ENCODE measurements at regions of chr12 and their contacts with region 1.

Region 1: GRCh38 chr12:56189176-56189917 is at the start of gene SMARCC2:
- DNase-seq: peak; percentile 26
- ATAC-seq: peak; percentile 81
- H3K4me3 ChIP-seq: peak within 1 kb of the TSS; percentile 98
- H3K27ac ChIP-seq: peak within 1 kb of the TSS; percentile 91
- H3K4me1 ChIP-seq: 0 out of 2 replicates have a peak, but pooled peaks cover 4% of the 10 kb centered on the region
- H3K27me3 ChIP-seq: no peaks in the 10 kb centered on the region
- CTCF ChIP-seq: peak; percentile 68 to 87 (median 72); a peak in 5 of 6 replicates
- EP300 ChIP-seq: no peak
- POLR2A ChIP-seq: peak; percentile 79
- RAD21 ChIP-seq: peak; percentile 46
- polyA plus RNA-seq, gene SMARCC2: 13.6 to 27.8 TPM

Region 2: DNA sequence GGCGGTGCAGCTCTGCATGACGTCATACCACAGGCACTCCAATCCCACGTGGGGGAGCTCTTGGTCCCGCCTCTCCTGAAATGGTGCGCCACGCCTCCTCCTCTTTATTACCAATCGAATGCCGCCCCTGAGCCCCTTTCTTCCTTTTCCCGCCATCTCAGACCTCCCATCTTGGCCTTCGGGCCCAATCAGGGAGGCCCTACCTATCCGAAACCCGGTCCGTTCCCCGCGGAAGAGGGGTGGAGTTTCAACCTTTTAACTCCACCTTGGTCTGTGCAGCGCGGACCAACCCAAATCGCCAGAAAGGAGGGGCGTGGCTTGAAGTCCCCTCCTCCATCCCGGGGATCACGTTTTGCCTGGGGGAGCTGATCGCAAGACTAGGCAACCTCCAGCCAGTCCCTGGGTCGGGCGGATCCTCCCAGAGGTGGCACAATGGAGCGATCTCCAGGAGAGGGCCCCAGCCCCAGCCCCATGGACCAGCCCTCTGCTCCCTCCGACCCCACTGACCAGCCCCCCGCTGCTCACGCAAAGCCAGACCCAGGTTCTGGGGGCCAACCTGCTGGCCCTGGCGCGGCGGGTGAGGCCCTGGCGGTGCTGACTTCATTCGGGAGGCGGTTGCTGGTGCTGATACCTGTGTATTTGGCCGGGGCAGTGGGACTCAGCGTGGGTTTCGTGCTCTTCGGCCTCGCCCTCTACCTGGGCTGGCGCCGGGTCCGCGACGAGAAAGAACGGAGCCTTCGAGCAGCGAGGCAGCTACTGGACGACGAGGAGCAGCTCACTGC is 61.3 kb before region 1 on chr12 and contains the start of gene ESYT1:
- CTCF ChIA-PET with region 1: interaction called, 129 read pairs
- POLR2A ChIA-PET with region 1: interaction called, 44 read pairs
- RAD21 ChIA-PET with region 1: interaction called, 98 read pairs
- SMC1A ChIA-PET with region 1: interaction called, 68 read pairs
- in situ Hi-C with region 1: loop called (anchors 5 kb)
- intact Hi-C with region 1: loop called (anchors 1 kb)
- DNase-seq: peak; percentile 98
- ATAC-seq: peak; percentile 93
- H3K4me3 ChIP-seq: peak within 1 kb of the TSS; percentile 93
- H3K27ac ChIP-seq: peak within 1 kb of the TSS; percentile 72
- H3K4me1 ChIP-seq: peaks cover 24% of the 10 kb centered on the region
- H3K27me3 ChIP-seq: no peaks in the 10 kb centered on the region
- CTCF ChIP-seq: no peak
- EP300 ChIP-seq: peak in 1 of 2 experiments; percentile 17; a peak in 1 of 4 replicates
- POLR2A ChIP-seq: peak; percentile 87
- RAD21 ChIP-seq: no peak
- polyA plus RNA-seq, gene ESYT1: 55.6 to 57.9 TPM

Region 3: GRCh38 chr12:56206457-56207166 is 17.3 kb after region 1 on chr12:
- CTCF ChIA-PET with region 1: interaction called, 26 read pairs
- POLR2A ChIA-PET with region 1: no interaction called
- RAD21 ChIA-PET with region 1: interaction called, 4 read pairs
- SMC1A ChIA-PET with region 1: interaction called, 6 read pairs
- in situ Hi-C with region 1: no loop called
- intact Hi-C with region 1: no loop called
- DNase-seq: no peak
- ATAC-seq: peak; percentile 95
- H3K4me3 ChIP-seq: no peak overlapping the region
- H3K27ac ChIP-seq: no peak overlapping the region
- H3K4me1 ChIP-seq: no peaks in the 10 kb centered on the region
- H3K27me3 ChIP-seq: no peaks in the 10 kb centered on the region
- CTCF ChIP-seq: peak; percentile 67 to 79 (median 75)
- EP300 ChIP-seq: no peak
- POLR2A ChIP-seq: no peak; the same call in 1 of the 2 replicates
- RAD21 ChIP-seq: peak; percentile 45

Region 4: DNA sequence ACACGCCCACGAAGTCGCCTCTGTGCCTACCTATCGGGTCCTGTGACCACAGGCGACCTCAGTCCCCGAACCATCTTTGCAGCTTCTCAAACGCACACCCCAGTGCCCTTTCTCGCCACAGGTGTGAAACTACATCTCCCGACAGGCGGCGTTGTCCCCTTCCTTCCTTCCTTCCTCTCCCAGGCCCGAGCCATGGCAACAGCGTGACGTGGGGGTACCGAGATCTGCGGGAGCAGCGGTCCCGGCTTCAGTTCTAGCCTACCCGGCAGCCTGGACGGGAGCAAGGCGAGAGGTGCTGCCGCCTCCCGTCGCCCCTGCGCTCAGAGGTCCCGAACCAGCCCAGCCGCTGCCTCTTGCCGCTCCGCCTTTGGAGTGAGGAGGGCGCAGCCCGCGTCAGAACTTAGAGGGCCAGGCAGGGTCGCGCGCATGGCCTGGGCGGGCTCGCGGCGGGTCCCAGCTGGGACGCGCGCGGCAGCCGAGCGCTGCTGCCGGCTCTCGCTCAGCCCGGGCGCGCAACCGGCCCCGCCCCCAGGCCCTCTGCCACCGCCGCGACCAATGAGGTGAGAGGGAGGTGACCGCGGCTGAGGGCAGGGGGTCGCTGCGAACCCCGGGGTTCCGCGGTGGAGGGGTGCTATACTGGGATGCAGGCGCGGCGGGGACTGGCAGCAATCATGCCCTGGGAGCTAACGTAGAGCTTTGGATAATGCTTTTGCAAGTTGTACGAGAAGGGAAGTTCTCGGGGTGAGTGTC is 77.5 kb after region 1 on chr12 and contains the start of gene COQ10A:
- CTCF ChIA-PET with region 1: interaction called, 4 read pairs
- POLR2A ChIA-PET with region 1: interaction called, 3 read pairs
- RAD21 ChIA-PET with region 1: interaction called, 10 read pairs
- SMC1A ChIA-PET with region 1: interaction called, 3 read pairs
- in situ Hi-C with region 1: no loop called
- intact Hi-C with region 1: no loop called
- DNase-seq: peak; percentile 48
- ATAC-seq: peak; percentile 97
- H3K4me3 ChIP-seq: peak within 1 kb of the TSS; percentile 68
- H3K27ac ChIP-seq: peak within 1 kb of the TSS; percentile 41
- H3K4me1 ChIP-seq: peaks cover 4% of the 10 kb centered on the region
- H3K27me3 ChIP-seq: no peaks in the 10 kb centered on the region
- CTCF ChIP-seq: peak; percentile 53 to 62 (median 62)
- EP300 ChIP-seq: no peak
- POLR2A ChIP-seq: peak; percentile 97
- RAD21 ChIP-seq: peak; percentile 24; the same call in 1 of the 2 replicates
- polyA plus RNA-seq, gene COQ10A: 3.3 to 4.5 TPM

Region 5: GRCh38 chr12:56280849-56281248 is 91.5 kb after region 1 on chr12:
- CTCF ChIA-PET with region 1: no interaction called
- POLR2A ChIA-PET with region 1: no interaction called
- RAD21 ChIA-PET with region 1: no interaction called
- SMC1A ChIA-PET with region 1: no interaction called
- in situ Hi-C with region 1: no loop called
- intact Hi-C with region 1: no loop called
- DNase-seq: no peak
- ATAC-seq: no peak
- H3K4me3 ChIP-seq: no peak overlapping the region
- H3K27ac ChIP-seq: no peak overlapping the region
- H3K4me1 ChIP-seq: no peaks in the 10 kb centered on the region
- H3K27me3 ChIP-seq: no peaks in the 10 kb centered on the region
- CTCF ChIP-seq: no peak
- EP300 ChIP-seq: no peak
- POLR2A ChIP-seq: no peak
- RAD21 ChIP-seq: no peak

Region 6: DNA sequence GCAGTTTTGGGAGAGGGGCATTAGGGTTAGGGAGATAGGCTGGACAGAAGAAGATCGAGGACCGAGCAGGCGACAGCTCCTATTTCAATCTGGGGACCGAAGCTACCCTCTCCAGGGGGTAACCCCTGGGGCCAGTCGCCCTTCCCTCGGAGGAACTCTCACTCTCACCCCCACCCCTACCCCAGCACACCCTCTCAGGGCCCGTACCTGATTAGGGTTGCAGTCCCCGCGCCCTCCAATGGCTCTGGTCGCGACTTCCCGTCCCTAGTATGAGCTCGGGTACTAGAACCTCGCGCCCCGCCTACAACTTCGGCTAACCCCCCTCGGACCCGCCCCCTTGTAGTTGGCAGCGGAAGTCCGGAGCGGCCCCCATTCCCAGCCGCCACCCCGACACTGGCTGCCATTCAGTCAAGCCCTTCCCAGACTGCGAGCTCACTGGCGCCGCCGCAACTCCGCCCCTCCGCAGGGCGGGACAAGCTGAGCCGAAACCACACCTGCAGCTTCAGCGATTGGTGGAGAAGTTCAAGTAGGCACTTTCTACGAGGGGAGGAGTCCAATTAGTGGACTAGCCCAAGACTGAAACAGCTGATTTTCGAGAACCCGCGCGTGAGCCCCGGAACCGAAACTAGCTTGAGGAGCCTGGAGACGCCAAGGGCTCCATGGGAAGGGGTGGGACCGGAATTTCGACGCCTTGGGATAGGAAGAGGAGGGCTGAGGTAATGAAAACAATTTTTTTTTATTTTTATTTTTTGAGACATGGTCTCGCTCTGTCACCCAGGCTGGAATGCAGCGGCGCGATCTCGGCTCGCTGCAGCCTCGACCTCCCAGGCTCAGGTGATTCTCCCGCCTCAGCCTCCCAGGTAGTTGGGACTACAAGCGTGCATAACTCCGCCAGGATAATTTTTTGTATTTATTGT is 170.8 kb after region 1 on chr12 and contains the start of gene STAT2:
- CTCF ChIA-PET with region 1: no interaction called
- POLR2A ChIA-PET with region 1: interaction called, 5 read pairs
- RAD21 ChIA-PET with region 1: interaction called, 14 read pairs
- SMC1A ChIA-PET with region 1: no interaction called
- in situ Hi-C with region 1: no loop called
- intact Hi-C with region 1: no loop called
- DNase-seq: peak; percentile 99
- ATAC-seq: peak; percentile 98
- H3K4me3 ChIP-seq: peak within 1 kb of the TSS; percentile 93
- H3K27ac ChIP-seq: peak within 1 kb of the TSS; percentile 89
- H3K4me1 ChIP-seq: peaks cover 5% of the 10 kb centered on the region; the same call in 1 of the 2 replicates
- H3K27me3 ChIP-seq: no peaks in the 10 kb centered on the region
- CTCF ChIP-seq: no peak
- EP300 ChIP-seq: no peak
- POLR2A ChIP-seq: peak; percentile 90
- RAD21 ChIP-seq: no peak
- polyA plus RNA-seq, gene STAT2: 16.9 to 23.5 TPM

Region 7: GRCh38 chr12:56593909-56594621 is 404.7 kb after region 1 on chr12:
- CTCF ChIA-PET with region 1: no interaction called
- POLR2A ChIA-PET with region 1: no interaction called
- RAD21 ChIA-PET with region 1: no interaction called
- SMC1A ChIA-PET with region 1: no interaction called
- in situ Hi-C with region 1: no loop called
- intact Hi-C with region 1: loop called (anchors 10 kb)
- DNase-seq: no peak
- ATAC-seq: peak; percentile 80
- H3K4me3 ChIP-seq: no peak overlapping the region
- H3K27ac ChIP-seq: no peak overlapping the region
- H3K4me1 ChIP-seq: no peaks in the 10 kb centered on the region; the same call in 1 of the 2 replicates
- H3K27me3 ChIP-seq: no peaks in the 10 kb centered on the region
- CTCF ChIP-seq: peak; percentile 83 to 94 (median 91)
- EP300 ChIP-seq: no peak
- POLR2A ChIP-seq: 0 out of 2 replicates have a peak, but pooled peaks have one; percentile 35
- RAD21 ChIP-seq: peak; percentile 88

Region 8: DNA sequence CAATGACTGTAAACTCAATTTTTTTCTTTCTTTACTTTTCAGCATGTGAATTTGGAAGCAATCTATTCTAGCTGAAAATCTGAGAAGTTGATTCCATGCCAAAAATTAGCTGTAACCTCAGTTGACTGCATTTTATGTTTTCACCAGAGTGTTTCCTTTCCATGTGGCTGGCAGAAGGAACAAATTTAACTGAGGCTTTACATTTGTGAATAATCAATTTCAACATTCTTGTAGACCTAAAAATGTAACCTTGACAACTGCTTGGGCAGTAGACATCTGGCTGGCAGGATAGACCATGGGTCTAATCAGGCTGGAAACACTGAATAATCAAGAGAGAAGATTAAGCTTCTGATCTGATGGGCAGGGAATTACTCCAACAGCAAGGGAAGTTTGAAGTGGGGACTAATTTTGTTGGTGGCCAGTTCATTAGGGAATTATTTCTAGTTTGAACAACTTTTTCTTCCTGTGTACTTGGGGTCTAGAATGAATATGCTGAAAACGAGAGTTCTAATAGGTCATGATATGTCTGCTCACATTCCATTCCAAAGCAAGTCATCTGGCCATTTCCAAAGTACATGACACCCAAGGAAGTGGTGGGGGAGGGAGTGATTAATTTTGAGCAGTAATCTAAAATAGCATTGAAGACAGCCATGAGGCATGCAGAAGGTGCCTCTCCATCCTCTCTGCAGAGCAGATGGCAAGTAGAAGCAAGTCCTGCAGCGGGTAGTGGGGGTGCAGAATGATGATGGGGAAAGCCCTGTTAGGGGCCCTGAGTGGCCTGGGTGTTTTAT is 1820.3 kb after region 1 on chr12:
- CTCF ChIA-PET with region 1: no interaction called
- POLR2A ChIA-PET with region 1: no interaction called
- RAD21 ChIA-PET with region 1: no interaction called
- SMC1A ChIA-PET with region 1: no interaction called
- in situ Hi-C with region 1: no loop called
- intact Hi-C with region 1: no loop called
- DNase-seq: no peak
- ATAC-seq: no peak
- H3K4me3 ChIP-seq: no peak overlapping the region
- H3K27ac ChIP-seq: no peak overlapping the region
- H3K4me1 ChIP-seq: no peaks in the 10 kb centered on the region
- H3K27me3 ChIP-seq: no peaks in the 10 kb centered on the region
- CTCF ChIP-seq: no peak
- EP300 ChIP-seq: no peak
- POLR2A ChIP-seq: no peak
- RAD21 ChIP-seq: no peak

Measured in GM12878 (cell line).